Activated CD8-positive, alpha-beta T cell treated with anti-CD3 and anti-CD28 coated beads, Interleukin-2, amount 10 ng/mL, durations not matched to agents 7 days and 5 days (primary cell): ENCODE measurements at regions of chr1 and their contacts with region 1.

Region 1: DNA sequence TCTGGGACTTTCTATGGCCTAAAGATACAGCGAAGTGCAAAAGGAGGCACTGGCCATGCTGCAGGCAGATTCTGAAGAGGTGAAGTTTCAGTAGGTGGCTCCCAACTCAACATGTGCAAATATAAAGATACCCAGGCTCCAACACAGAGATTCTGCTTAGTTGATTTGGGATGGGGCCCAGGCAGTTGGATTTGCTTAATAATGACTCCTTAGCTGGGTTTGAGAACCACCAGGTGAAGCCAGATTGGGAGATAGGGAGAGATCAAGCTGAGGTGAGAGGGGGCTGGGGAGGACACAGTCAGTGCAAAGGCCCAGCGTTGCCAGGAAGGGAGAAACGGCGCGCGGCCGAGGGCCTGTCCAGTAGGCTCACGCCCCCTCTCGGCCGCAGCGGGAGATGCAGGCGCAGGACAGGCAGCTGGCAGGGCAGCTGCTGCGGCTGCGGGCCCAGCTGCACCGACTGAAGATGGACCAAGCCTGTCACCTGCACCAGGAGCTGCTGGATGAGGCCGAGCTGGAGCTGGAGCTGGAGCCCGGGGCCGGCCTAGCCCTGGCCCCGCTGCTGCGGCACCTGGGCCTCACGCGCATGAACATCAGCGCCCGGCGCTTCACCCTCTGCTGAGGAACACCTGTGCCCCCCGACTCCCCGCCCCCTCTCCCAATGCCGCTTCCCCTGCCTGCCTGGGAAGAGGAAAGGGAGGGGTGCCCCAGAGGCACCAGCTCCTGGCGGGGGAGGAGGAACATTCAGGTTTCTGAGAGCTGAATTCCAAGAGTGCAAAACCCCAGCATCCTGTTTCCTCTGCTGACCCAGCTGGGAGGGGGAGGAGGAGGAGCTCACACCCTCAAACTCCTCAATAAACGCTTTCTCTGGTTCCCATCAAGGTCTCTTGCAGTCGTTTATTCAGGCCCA is 1.2 kb downstream of the FAM167B start:
- DNase-seq: peak; percentile 86
- ATAC-seq: peak; percentile 25
- H3K4me3 Mint-ChIP-seq: peak overlapping the region; percentile 99
- H3K27ac Mint-ChIP-seq: peak overlapping the region; percentile 95
- H3K4me1 Mint-ChIP-seq: peaks cover 50% of the 10 kb centered on the region
- H3K27me3 Mint-ChIP-seq: no peaks in the 10 kb centered on the region

Region 2: DNA sequence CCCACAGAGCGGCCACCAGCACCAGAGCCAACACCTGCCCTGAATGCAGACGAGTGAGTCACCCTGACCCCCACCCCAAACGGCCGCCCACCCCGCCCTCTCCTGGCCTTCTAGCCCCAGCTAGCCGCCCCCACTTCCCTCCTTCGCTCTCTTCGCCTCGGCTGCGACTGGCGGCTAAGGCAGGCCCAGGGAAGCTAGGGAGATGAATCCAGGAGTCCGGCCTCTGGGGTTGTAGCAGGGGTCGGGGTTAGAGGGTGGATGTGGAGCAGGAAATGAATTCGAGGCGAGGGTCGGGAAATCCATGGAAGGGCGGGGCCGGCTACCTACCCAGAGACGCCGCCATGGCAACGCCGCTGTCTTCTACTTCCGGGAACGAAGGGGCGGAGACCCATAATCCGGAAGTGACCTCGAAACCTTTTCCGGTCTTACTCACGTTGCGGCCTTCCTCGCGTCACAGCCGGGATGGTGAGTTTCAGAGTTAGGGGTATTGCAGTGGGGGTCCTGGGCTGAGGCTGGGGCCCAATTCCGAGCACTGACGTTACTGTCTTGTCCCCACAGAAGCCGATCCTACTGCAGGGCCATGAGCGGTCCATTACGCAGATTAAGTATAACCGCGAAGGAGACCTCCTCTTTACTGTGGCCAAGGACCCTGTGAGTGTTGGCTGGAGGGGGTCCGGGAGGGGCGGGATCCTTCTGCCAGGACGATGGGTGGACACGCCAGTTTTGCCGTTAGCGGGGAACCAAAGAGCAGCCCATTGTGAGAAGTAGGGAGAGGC is 26.1 kb before region 1 on chr1 and contains the starts of genes EIF3I and TMEM234:
- CTCF ChIA-PET with region 1: interaction called, 58 read pairs
- POLR2A ChIA-PET with region 1: interaction called, 4 read pairs
- DNase-seq: peak; percentile 96
- ATAC-seq: peak; percentile 86
- H3K4me3 Mint-ChIP-seq: peak within 1 kb of the TSS; percentile 97
- H3K27ac Mint-ChIP-seq: peak within 1 kb of the TSS; percentile 98
- H3K4me1 Mint-ChIP-seq: peaks cover 31% of the 10 kb centered on the region
- H3K27me3 Mint-ChIP-seq: no peaks in the 10 kb centered on the region
- total RNA-seq, gene EIF3I: 194 to 196 TPM
- total RNA-seq, gene TMEM234: 10.6 TPM

Region 3: DNA sequence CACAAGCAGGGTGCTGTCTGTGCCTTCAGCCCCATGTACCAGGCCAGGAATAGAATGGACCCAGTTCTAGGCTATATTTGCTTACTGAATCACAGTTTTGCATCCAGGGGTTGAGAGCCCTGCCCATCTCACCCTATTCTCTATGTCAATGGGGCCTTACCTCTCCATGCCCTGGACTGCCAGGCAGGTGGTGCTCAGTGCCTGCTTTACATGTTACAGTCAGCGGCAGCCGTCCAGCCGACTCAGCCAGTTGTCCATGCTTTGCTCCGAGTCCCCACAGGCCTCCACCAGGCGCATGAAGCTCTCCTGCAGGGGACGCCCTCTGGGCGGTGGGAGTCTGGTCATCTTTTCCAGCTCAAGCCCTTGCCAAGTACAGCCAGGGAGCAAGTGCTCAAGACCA is 13.4 kb before region 1 on chr1:
- CTCF ChIA-PET with region 1: interaction called, 66 read pairs
- POLR2A ChIA-PET with region 1: interaction called, 71 read pairs
- DNase-seq: no peak
- ATAC-seq: no peak
- H3K4me3 Mint-ChIP-seq: no peak overlapping the region
- H3K27ac Mint-ChIP-seq: no peak overlapping the region
- H3K4me1 Mint-ChIP-seq: no peaks in the 10 kb centered on the region
- H3K27me3 Mint-ChIP-seq: no peaks in the 10 kb centered on the region

Region 4: DNA sequence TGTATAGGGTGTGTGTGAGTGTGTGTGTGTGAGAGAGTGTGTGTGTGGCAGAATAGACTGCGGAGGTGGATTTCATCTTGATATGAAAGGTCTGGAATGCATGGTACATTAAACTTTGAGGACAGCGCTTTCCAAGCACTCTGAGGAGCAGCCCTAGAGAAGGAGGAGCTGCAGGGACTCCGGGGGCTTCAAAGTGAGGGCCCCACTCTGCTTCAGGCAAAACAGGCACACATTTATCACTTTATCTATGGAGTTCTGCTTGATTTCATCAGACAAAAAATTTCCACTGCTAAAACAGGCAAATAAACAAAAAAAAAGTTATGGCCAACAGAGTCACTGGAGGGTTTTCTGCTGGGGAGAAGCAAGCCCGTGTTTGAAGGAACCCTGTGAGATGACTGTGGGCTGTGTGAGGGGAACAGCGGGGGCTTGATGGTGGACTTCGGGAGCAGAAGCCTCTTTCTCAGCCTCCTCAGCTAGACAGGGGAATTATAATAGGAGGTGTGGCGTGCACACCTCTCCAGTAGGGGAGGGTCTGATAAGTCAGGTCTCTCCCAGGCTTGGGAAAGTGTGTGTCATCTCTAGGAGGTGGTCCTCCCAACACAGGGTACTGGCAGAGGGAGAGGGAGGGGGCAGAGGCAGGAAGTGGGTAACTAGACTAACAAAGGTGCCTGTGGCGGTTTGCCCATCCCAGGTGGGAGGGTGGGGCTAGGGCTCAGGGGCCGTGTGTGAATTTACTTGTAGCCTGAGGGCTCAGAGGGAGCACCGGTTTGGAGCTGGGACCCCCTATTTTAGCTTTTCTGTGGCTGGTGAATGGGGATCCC is 25.4 kb after region 1 on chr1:
- CTCF ChIA-PET with region 1: interaction called, 10 read pairs
- POLR2A ChIA-PET with region 1: interaction called, 137 read pairs
- DNase-seq: peak; percentile 87
- ATAC-seq: peak; percentile 84
- H3K4me3 Mint-ChIP-seq: peak overlapping the region; percentile 59
- H3K27ac Mint-ChIP-seq: peak overlapping the region; percentile 86
- H3K4me1 Mint-ChIP-seq: peaks cover 63% of the 10 kb centered on the region
- H3K27me3 Mint-ChIP-seq: no peaks in the 10 kb centered on the region

Region 5: GRCh38 chr1:32321712-32322291 is 73.6 kb after region 1 on chr1:
- CTCF ChIA-PET with region 1: interaction called, 14 read pairs
- POLR2A ChIA-PET with region 1: interaction called, 3 read pairs
- DNase-seq: peak; percentile 51
- ATAC-seq: peak; percentile 83
- H3K4me3 Mint-ChIP-seq: peak overlapping the region; percentile 40
- H3K27ac Mint-ChIP-seq: peak overlapping the region; percentile 84
- H3K4me1 Mint-ChIP-seq: peaks cover 43% of the 10 kb centered on the region
- H3K27me3 Mint-ChIP-seq: no peaks in the 10 kb centered on the region

Region 6: GRCh38 chr1:32372149-32372756 is 124.0 kb after region 1 on chr1:
- CTCF ChIA-PET with region 1: no interaction called
- POLR2A ChIA-PET with region 1: no interaction called
- DNase-seq: peak; percentile 80
- ATAC-seq: peak; percentile 87
- H3K4me3 Mint-ChIP-seq: no peak overlapping the region
- H3K27ac Mint-ChIP-seq: peak overlapping the region; percentile 30
- H3K4me1 Mint-ChIP-seq: peaks cover 19% of the 10 kb centered on the region
- H3K27me3 Mint-ChIP-seq: no peaks in the 10 kb centered on the region